ENCODE measurements at regions of chr12 and their contacts with region 1.

Region 1: GRCh38 chr12:71685914-71686665 is at the start of gene TMEM19:
- DNase-seq: peak; percentile 91
- H3K4me3 ChIP-seq: peak within 1 kb of the TSS; percentile 66
- H3K27ac ChIP-seq: peak within 1 kb of the TSS; percentile 92
- H3K4me1 ChIP-seq: peaks cover 7% of the 10 kb centered on the region
- H3K27me3 ChIP-seq: no peaks in the 10 kb centered on the region
- CTCF ChIP-seq: no peak
- total RNA-seq, gene TMEM19: 37.7 to 39.2 TPM

Region 2: GRCh38 chr12:71746983-71747611 is 61.0 kb after region 1 on chr12:
- intact Hi-C with region 1: loop called (anchors 2 kb)
- DNase-seq: peak; percentile 51
- H3K4me3 ChIP-seq: no peak overlapping the region
- H3K27ac ChIP-seq: no peak overlapping the region
- H3K4me1 ChIP-seq: no peaks in the 10 kb centered on the region
- H3K27me3 ChIP-seq: no peaks in the 10 kb centered on the region
- CTCF ChIP-seq: peak; percentile 72

Region 3: DNA sequence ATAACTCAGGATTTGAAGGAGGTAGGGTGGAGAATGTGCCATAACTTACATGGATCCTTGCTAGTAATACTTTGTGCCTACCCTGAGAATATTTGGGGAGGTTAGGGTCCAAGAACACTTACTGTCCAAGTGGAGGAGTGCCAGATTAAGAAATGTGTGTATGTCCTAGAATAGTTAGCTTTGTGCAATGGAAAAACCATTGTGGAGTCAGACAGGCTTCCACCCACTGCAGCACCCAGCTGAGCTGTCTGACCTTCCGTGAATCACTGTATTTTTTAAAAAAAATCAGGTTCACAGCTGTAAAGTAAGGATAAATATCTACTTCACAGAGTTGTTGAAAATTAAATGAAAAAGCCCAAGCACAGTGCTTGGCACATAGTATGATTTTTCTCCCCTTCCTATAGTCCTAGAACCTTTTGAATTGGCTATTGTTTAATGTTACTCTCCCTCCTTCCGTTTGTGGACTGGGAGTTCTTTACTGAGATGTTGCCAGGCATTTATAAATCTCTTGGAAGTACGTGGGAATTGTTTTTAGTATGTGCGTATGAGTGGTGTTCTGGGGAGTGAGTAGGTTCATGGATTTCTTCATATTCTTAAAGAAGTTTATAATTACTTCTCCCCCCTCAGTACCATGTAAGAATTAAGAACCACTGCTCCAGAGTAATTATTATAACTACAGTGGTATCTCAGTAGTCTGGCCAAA is 77.7 kb after region 1 on chr12:
- intact Hi-C with region 1: no loop called
- DNase-seq: no peak
- H3K4me3 ChIP-seq: no peak overlapping the region
- H3K27ac ChIP-seq: no peak overlapping the region
- H3K4me1 ChIP-seq: no peaks in the 10 kb centered on the region
- H3K27me3 ChIP-seq: no peaks in the 10 kb centered on the region
- CTCF ChIP-seq: no peak

Measured in colonic mucosa (tissue), 4 donors.